Adrenal gland (tissue), 19 donors: ENCODE measurements at regions of chr16 and their contacts with region 1.

Region 1: DNA sequence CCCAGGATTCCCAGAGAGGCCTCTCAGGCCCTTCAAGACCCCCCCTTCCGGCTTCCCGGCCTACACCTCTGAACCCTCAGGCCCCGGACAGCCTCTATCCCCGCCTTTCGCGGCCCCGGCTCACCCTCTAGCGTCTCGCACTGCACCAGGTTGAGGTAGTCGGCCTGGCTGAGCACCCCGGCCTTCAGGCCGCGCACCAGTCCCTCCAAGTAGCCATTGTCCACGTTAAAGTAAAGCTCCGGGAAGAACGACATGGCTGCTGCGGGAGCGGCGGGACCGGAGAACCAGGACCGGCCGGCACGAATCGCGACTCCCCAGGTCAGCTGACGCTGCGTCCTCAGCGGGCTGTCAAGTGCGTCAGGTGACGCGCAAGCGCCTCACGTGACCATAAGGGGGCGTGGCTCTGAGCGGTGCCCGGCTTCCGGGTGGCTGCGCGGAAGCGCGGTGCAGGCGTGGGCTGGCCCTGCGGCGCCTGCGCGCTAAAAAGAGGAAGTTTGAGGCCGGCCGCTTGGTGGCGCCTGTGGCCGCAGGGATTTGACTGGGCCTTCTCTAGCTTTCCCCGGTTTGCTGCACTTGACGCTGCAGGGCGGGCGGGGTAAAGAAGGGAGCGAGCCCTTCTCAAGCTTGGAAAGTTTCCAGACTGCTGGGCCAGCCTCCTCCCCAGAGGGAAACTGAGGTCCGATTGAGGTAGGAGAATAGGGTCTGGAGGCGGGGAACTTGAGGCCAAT is at the start of gene ATP6V0D1:
- DNase-seq: peak; percentile 98 to 99 (median 99)
- H3K4me3 ChIP-seq: peak within 1 kb of the TSS; percentile 67 to 96 (median 86)
- H3K27ac ChIP-seq: peak within 1 kb of the TSS; percentile 93 to 99 (median 97)
- H3K4me1 ChIP-seq: peaks cover 32 to 62% of the 10 kb centered on the region in 2 donors
- H3K27me3 ChIP-seq: no peaks in the 10 kb centered on the region
- CTCF ChIP-seq: peak; percentile 83 to 97 (median 89)
- POLR2A ChIP-seq: peak; percentile 76 to 92
- total RNA-seq, gene ATP6V0D1: 114 to 244 (median 167) TPM

Region 2: GRCh38 chr16:67516296-67517154 is 35.5 kb after region 1 on chr16:
- intact Hi-C with region 1: loop called in 1 of 2 experiments (anchors 5 kb)
- DNase-seq: no peak
- H3K4me3 ChIP-seq: no peak overlapping the region
- H3K27ac ChIP-seq: no peak overlapping the region
- H3K4me1 ChIP-seq: peaks cover 0 to 3% of the 10 kb centered on the region in 2 donors
- H3K27me3 ChIP-seq: no peaks in the 10 kb centered on the region
- CTCF ChIP-seq: no peak
- POLR2A ChIP-seq: no peak